Activated CD8-positive, alpha-beta memory T cell treated with anti-CD3 and anti-CD28 coated beads, Interleukin-2, amount 10 ng/mL, durations not matched to agents 7 days and 5 days (primary cell): ENCODE measurements at regions of chr22 and their contacts with region 1.

Region 1: GRCh38 chr22:46367707-46368191 is 32.2 kb downstream of the TRMU start:
- DNase-seq: peak; percentile 78
- ATAC-seq: peak; percentile 78
- H3K4me3 Mint-ChIP-seq: no peak overlapping the region
- H3K27ac Mint-ChIP-seq: no peak overlapping the region
- H3K4me1 Mint-ChIP-seq: peaks cover 10% of the 10 kb centered on the region
- H3K27me3 Mint-ChIP-seq: no peaks in the 10 kb centered on the region

Region 2: DNA sequence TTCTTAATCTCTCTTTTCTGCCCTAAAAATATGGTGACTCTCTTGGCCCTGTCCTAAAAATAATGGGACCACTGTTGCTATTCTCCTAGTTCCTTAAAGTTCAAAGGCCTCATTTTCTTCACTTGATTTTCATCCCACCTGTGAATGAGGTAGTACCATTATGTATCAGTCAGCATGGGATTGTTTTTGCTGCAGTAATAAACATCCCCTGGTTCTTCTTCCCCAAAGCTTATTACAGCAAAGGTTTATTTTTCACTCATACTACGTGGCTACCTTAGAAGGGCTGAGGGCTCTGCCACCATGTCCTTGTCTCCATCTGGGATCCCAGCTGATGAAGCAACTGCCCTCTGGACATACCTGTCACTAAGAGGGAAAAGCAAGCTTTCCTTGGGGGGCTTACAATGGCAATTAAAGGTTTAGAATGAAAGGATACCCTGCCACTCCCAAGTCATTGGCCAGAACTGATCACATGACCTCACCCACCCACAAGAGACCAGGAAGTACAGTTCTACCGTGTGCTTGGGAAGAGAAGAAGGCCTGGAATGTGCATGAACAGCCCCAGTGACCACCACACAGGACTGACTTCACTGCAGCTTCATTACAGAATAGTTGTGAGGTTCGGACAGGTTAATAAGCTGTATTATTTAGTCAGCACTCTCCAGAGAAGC is 92.2 kb before region 1 on chr22:
- CTCF ChIA-PET with region 1: no interaction called
- DNase-seq: no peak
- ATAC-seq: no peak
- H3K4me3 Mint-ChIP-seq: no peak overlapping the region
- H3K27ac Mint-ChIP-seq: no peak overlapping the region
- H3K4me1 Mint-ChIP-seq: peaks cover 15% of the 10 kb centered on the region
- H3K27me3 Mint-ChIP-seq: no peaks in the 10 kb centered on the region

Region 3: GRCh38 chr22:46335201-46336118 is 32.3 kb before region 1 on chr22 and contains the start of gene TRMU:
- CTCF ChIA-PET with region 1: interaction called, 10 read pairs
- DNase-seq: peak; percentile 83
- ATAC-seq: peak; percentile 93
- H3K4me3 Mint-ChIP-seq: peak within 1 kb of the TSS; percentile 96
- H3K27ac Mint-ChIP-seq: peak within 1 kb of the TSS; percentile 87
- H3K4me1 Mint-ChIP-seq: peaks cover 26% of the 10 kb centered on the region
- H3K27me3 Mint-ChIP-seq: no peaks in the 10 kb centered on the region
- total RNA-seq, gene TRMU: 86.7 to 89.1 TPM

Region 4: DNA sequence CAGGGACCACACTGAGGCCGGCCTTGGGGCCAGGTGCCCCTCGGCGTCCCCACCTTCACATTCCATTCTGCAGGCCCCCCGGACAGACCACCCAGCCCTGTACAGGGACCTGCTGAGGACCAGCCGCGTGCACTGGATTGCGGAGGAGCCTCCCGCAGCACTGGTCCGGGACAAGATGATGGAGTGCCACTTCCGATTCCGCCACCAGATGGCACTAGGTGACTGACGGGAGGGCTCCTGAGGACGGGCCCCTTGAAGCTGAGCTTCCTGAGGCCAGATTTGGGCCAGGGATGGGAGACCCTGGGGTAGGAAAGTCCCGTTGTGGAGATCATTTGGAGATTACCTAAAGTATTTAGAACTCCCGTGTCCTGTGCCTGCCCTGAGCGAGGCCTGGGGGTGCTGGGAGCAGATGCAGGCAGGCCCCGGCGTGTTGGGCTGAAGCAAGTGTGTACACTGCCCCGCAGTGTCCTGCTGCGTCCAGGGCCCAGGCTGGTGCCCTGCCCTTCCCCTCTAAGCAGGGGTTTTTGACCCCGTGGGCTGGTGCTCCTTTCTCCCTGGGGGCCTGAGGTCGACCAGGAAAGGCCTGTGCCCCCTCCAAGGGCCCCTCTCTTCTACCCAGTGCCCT is 12.3 kb before region 1 on chr22:
- CTCF ChIA-PET with region 1: interaction called, 11 read pairs
- DNase-seq: peak; percentile 74
- ATAC-seq: peak; percentile 66
- H3K4me3 Mint-ChIP-seq: no peak overlapping the region
- H3K27ac Mint-ChIP-seq: no peak overlapping the region
- H3K4me1 Mint-ChIP-seq: no peaks in the 10 kb centered on the region
- H3K27me3 Mint-ChIP-seq: no peaks in the 10 kb centered on the region

Region 5: GRCh38 chr22:46392137-46392844 is 24.5 kb after region 1 on chr22:
- CTCF ChIA-PET with region 1: interaction called, 11 read pairs
- DNase-seq: no peak
- ATAC-seq: no peak
- H3K4me3 Mint-ChIP-seq: no peak overlapping the region
- H3K27ac Mint-ChIP-seq: no peak overlapping the region
- H3K4me1 Mint-ChIP-seq: no peaks in the 10 kb centered on the region
- H3K27me3 Mint-ChIP-seq: no peaks in the 10 kb centered on the region

Region 6: DNA sequence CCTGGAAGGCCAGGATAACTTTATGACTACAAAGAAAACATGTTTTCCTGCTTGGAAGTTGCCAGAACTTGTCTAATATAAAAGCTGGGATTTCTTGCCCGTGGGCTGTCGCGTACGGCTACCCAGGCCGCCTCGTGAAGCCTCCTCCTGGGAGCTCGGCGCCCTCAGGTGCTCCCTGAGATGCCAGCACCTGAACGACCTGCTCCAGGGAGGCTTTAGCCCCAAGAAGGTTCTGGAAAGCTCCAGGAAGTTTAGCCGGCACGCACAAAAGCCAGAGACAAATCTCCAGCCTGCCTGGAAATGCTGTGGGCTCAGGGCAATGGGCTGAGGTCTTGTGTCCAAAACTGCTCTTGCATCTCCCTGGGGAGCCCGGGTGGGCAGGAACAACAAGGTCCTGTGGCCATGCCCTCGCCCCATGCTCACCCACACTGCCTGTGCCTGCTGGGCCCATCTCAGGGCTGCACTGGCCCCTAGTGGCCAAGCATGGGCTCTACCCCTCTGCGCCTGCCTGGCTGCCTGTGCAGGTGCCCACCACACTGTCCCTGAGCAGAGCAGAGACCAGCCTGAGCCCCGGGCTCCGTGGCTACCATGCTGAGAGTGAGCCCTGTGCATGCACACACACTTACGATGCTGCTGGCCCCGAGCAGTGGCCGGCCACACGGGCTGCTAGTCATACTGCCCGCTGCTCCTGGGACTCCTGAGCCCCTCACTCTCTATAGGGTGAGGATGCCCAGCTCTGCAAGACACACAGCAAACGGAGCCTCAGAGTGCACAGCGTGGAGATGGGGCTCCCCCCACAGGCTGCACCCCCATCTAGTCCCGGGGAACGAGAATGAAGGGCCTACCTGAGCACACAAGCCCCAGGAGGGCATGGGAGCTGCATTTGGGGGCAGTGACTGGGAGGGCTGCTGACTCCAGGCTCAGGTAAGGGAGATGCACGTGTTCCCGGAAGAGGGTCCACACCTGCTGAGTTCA is 174.5 kb after region 1 on chr22:
- CTCF ChIA-PET with region 1: interaction called, 69 read pairs
- DNase-seq: peak; percentile 76
- ATAC-seq: peak; percentile 99
- H3K4me3 Mint-ChIP-seq: no peak overlapping the region
- H3K27ac Mint-ChIP-seq: no peak overlapping the region
- H3K4me1 Mint-ChIP-seq: peaks cover 4% of the 10 kb centered on the region
- H3K27me3 Mint-ChIP-seq: peaks cover 37% of the 10 kb centered on the region